Sciatic nerve (tissue), 2 donors: ENCODE measurements at regions of chr3 and their contacts with region 1.

Region 1: DNA sequence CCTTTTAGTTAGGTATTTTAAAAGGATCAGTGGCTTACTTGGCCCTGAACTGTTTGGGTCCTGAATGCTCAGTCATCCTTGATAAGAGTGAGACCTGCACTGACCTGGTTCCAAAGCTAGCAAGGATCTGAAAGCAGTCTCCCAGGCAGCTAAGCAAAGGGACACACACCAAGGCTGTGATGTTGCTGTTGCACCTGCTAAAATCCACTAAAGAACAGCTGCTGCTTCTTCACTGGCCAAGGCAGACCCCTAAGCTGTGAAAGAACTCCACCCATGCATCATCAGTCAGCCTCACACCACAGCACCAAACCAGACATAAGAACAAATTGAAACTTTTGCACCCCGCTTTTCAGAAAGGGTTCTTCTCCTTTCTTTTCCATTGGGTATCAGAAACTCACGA is 213.4 kb upstream of the STT3B start:
- DNase-seq: no peak
- ATAC-seq: no peak

Region 2: GRCh38 chr3:29397406-29397805 is 1921.9 kb before region 1 on chr3:
- intact Hi-C with region 1: loop called (anchors 10 kb)
- DNase-seq: no peak
- ATAC-seq: no peak